ENCODE measurements at regions of chr5 and their contacts with region 1.

Region 1: DNA sequence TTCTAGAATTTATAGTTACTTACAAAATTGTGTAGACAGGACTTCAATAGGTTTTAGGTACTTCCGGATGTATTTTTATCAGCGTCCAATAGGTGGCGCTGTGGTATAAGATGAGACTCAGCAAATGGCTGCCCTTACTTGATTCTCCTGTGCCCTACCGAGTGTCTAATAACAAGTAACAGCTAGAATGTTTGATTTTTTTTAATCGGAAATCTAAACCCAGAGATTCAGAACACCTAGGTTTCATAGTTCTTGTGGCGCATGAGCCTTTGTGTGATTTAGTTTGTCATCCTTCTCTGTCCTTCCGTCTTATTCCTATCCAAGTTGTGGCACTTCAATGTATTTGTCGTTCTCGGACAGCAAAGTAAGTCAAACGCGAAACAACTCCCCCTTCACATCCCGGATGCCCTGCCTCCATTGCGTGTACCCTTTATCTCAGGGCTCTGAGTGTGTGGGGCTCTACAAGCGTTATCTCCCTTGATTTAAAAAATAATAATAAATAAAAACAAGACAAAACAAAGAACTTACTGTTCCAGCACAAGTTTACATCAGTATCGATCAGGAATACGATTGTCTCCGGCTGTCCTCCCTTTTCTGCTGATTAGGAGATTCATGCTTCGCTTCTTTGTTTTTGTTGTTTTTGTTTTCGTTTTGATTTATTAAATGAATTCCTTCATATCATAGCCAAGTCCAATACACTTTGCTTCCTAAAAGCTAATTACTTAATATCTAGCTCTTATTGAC is 50.7 kb upstream of the SLC30A5 start:
- DNase-seq: peak; percentile 94
- H3K4me3 ChIP-seq: peak overlapping the region; percentile 38 to 87 (median 82)
- H3K27ac ChIP-seq: peak overlapping the region; percentile 43
- H3K4me1 ChIP-seq: peaks cover 6% of the 10 kb centered on the region
- H3K27me3 ChIP-seq: peaks cover 5 to 6% of the 10 kb centered on the region in 2 experiments
- CTCF ChIP-seq: peak; percentile 60 to 63
- POLR2A ChIP-seq: no peak

Region 2: GRCh38 chr5:69189162-69190086 is 146.3 kb after region 1 on chr5 and contains the start of gene CENPH:
- CTCF ChIA-PET with region 1: no interaction called
- POLR2A ChIA-PET with region 1: no interaction called
- dilution Hi-C with region 1: no loop called
- intact Hi-C with region 1: no loop called
- DNase-seq: peak; percentile 92
- H3K4me3 ChIP-seq: peak within 1 kb of the TSS; percentile 56 to 91 (median 80)
- H3K27ac ChIP-seq: peak within 1 kb of the TSS; percentile 73
- H3K4me1 ChIP-seq: peaks cover 12% of the 10 kb centered on the region
- H3K27me3 ChIP-seq: no peaks in the 10 kb centered on the region
- CTCF ChIP-seq: no peak
- POLR2A ChIP-seq: peak; percentile 78
- total RNA-seq, gene CENPH: 16.4 and 17.1 TPM in 2 replicates

Region 3: DNA sequence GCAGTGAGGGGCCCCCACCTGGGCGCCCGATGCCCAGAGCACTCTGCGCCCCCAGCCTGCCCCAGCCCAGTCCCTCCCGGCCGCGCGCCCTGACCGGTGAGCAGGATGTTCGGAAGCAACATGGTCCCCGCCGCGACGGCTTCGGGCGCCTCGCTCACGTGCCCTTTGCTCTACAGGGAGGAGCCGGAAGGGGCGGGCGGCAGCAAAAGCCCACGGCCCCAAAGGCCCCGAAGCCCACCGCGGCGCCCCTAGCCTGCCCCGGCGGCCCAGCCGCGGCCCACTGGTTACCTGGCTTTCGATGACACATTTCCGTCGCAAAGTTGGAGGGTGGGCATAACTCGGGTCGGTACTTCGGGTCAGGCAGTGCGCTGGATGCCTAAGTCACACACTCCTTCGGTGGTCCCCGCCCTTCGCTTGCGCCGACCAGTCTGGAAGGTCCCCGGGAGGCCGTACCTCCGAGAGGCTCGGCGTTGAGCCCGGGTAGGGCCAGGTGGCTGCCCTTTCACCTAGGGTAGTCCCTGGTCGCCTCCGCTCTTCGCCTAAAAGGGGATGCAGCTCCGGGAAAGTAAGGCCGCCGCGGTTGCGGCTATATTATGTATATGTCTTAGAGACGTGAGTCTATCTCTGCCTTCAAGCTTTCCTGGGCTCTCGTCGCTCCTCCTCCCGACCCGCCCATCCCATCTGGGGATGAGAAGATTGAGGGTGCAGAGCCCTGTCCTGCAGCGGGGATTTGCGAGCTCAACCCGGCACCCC is 326.5 kb after region 1 on chr5 and contains the starts of genes AK6, RAD17 and TAF9:
- CTCF ChIA-PET with region 1: interaction called, 8 read pairs
- POLR2A ChIA-PET with region 1: no interaction called
- dilution Hi-C with region 1: no loop called
- intact Hi-C with region 1: loop called (anchors 1 kb)
- DNase-seq: peak; percentile 95
- H3K4me3 ChIP-seq: peak within 1 kb of the TSS; percentile 82 to 100 (median 98)
- H3K27ac ChIP-seq: peak within 1 kb of the TSS; percentile 97
- H3K4me1 ChIP-seq: peaks cover 15% of the 10 kb centered on the region
- H3K27me3 ChIP-seq: no peaks in the 10 kb centered on the region
- CTCF ChIP-seq: no peak
- POLR2A ChIP-seq: peak; percentile 95
- total RNA-seq, gene AK6: 30.1 and 37.0 TPM in 2 replicates
- total RNA-seq, gene RAD17: 18.4 and 21.9 TPM in 2 replicates
- total RNA-seq, gene TAF9: 67.6 and 67.8 TPM in 2 replicates

Measured in endothelial cell of umbilical vein (primary cell).